ENCODE measurements at regions of chr9 and their contacts with region 1.

Region 1: GRCh38 chr9:118643118-118643517 is 726.1 kb downstream of the BRINP1 start:
- DNase-seq: peak; percentile 53 to 89
- H3K4me3 ChIP-seq: 0 out of 2 replicates have a peak overlapping the region, but pooled peaks have one; percentile 13
- H3K27ac ChIP-seq: no peak overlapping the region
- H3K4me1 ChIP-seq: peaks cover 10% of the 10 kb centered on the region; the same call in 1 of the 2 replicates
- H3K27me3 ChIP-seq: no peaks in the 10 kb centered on the region
- CTCF ChIP-seq: no peak

Region 2: GRCh38 chr9:118331622-118332045 is 311.5 kb before region 1 on chr9:
- CTCF ChIA-PET with region 1: no interaction called
- POLR2A ChIA-PET with region 1: no interaction called
- intact Hi-C with region 1: loop called (anchors 10 kb)
- DNase-seq: peak; percentile 55 to 74
- H3K4me3 ChIP-seq: no peak overlapping the region
- H3K27ac ChIP-seq: no peak overlapping the region
- H3K4me1 ChIP-seq: peaks cover 10% of the 10 kb centered on the region; the same call in 1 of the 2 replicates
- H3K27me3 ChIP-seq: no peaks in the 10 kb centered on the region
- CTCF ChIP-seq: no peak

Region 3: DNA sequence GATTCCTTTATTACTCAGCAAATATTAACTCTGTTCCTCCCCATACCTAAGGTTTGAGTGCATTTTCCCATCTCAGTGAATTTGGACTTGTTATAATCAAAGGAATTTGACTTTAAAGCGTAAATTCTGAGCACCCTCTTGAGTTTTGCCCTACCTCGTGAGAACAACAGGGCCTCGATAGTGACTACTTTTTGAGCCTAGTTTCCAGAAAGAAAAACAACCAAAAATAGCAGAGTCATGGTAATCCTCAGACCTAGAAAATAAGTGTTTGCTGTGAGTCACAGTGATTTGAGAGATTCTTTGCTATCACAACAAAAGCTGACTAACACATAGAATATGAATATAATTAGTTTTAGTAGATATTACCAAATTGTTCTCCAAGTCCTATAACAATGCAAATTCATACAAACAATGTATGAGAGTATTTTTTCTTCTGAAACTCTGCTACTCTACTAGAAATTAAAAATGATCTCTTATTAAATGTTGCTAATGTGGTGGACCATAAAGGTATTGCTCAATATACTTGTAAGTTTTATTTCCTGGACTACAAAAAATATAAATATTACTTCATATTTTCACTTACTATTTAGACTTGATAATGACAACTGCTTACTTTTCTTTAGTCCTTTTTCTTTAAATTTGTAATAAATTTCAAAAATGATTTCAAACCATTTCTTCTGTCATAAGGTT is 33.6 kb before region 1 on chr9:
- CTCF ChIA-PET with region 1: no interaction called
- POLR2A ChIA-PET with region 1: no interaction called
- intact Hi-C with region 1: loop called (anchors 2 kb)
- DNase-seq: peak in 1 of 2 experiments; percentile 46
- H3K4me3 ChIP-seq: no peak overlapping the region
- H3K27ac ChIP-seq: peak overlapping the region; percentile 70
- H3K4me1 ChIP-seq: peaks cover 11% of the 10 kb centered on the region
- H3K27me3 ChIP-seq: no peaks in the 10 kb centered on the region
- CTCF ChIP-seq: no peak

Region 4: DNA sequence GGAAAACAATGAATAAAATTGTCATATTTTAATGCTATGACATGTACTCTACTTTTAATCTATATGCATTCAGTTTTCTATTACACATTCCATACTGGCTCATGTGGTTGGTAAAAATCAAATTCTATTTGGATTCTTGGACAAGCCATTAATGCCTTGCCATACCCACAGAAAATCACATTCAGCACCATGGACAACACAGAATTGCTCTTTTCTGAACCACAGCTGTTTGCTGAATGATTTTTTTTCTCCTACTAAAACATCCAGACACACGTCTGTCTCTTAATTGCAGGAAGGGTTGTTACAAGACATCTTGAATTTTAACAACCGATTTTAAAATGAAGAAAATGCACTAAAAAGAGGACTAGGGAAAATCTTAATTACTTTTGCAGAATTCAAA is 50.5 kb after region 1 on chr9:
- CTCF ChIA-PET with region 1: no interaction called
- POLR2A ChIA-PET with region 1: no interaction called
- intact Hi-C with region 1: no loop called
- DNase-seq: no peak
- H3K4me3 ChIP-seq: no peak overlapping the region
- H3K27ac ChIP-seq: no peak overlapping the region
- H3K4me1 ChIP-seq: no peaks in the 10 kb centered on the region
- H3K27me3 ChIP-seq: no peaks in the 10 kb centered on the region
- CTCF ChIP-seq: no peak